ENCODE measurements at regions of chr10 and their contacts with region 1.

Region 1: DNA sequence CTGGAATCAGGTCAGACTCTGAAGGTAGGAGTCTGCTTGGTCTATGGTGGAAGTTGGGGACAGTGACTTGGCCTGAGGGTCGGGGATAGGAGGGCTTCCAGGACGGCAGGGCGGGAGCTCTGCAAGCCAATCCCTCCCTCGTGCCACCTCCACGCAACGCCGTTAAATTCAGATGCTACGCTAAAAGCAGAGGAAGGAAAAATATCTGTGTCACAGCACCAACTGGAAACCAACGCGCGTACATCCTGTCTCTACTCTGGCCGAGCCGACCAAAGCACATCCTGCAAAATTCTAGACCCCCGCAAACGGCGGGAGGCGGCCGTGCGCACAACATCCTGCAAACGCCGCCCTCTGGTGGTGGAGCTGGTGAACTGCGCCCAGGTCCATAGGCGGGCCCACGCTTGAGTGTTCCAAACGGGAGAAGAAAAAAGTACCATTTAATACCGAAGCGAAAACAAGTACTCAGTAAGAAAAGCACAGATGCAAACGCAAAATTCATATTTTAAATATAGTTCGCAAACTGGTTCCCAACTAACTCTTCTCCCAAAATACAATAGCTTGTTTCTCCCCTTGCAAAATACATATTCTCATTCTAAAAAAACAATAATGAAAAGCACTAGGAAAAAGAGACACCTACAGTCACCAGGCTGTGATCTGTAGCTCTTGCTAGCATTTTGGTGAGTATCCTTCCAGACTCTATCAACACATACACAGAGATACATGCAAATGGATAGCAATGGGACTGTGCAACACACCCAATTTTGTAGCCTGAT is 45.7 kb upstream of the HSPA12A start:
- DNase-seq: no peak
- H3K4me3 ChIP-seq: peak overlapping the region; percentile 10; the same call in 1 of the 2 replicates
- H3K27me3 ChIP-seq: no peaks in the 10 kb centered on the region; the same call in 1 of the 2 replicates
- CTCF ChIP-seq: peak; percentile 99

Region 2: DNA sequence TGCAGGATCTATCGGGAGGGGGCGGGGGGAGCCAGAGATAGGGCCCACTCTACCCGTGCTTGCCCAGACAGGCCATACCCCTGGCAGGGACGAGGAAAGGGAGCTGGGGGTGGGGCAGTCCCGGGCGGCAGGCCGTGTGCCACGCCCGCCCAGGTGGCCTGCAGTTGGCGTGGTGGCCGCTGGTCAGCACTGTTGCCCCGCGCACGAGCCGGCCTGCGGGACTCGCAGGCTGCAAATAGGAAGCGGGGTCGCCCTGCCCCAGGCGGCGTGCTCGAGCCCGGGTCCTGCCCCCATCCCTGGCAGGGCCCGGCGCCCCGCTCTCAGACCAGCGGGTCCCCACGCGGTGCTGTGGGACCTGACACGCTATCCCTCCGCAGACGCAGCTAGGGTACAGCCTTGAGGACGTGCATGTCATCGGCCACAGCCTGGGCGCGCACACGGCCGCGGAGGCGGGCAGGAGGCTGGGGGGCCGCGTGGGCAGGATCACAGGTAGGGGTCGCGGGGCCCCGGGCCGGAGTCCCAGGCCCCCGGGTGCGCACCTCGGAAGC is 160.6 kb before region 1 on chr10:
- CTCF ChIA-PET with region 1: interaction called, 28 read pairs
- POLR2A ChIA-PET with region 1: no interaction called
- DNase-seq: no peak
- H3K4me3 ChIP-seq: no peak overlapping the region
- H3K27me3 ChIP-seq: 0 out of 2 replicates have a peak, but pooled peaks cover 2% of the 10 kb centered on the region
- CTCF ChIP-seq: peak; percentile 38

Region 3: DNA sequence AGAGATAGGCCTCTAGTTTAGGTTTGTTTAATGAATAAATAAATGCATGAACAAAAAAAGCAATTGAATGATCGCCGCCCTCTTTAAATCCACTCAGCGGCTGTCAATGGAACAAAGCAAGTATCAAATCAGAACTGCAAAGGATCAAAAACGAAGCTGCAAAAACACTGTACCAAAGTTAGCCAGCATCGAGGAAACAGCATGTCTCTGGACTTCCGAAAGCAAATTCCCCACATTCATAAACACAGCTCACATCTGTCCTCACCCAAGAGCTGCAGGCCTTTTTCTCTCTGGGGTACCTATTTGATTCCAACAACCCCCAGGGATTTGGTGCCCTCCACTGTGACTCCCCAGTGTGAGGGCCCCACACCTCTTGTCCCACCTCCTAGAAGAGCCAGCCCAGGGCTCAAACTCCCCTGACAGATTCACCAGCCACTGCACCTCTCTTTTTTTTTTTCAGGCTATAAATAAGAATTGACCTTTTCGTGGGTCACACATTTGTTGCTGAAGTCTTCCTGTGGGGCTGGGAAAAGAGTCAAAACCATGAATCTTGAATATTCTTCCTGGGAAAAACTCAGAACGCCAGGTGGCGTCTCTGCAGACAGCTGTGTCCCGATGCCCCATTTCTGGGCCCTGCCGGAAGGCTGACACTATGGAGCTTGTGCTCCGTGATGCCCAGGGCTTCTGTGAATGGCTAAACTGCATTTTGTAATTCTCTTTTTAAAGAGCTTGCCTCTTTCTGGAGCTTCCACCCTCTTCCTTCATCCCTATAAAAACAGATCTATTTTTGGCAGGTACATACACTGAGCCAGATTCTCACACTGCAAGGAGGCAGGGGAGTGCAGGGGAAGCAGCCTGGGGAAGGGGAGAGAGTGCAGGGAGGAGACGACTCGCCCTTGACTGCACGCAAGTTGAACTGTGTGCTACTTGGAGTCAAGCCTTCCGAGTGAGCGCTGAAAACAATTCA is 97.4 kb before region 1 on chr10:
- CTCF ChIA-PET with region 1: interaction called, 335 read pairs
- POLR2A ChIA-PET with region 1: no interaction called
- DNase-seq: no peak
- H3K4me3 ChIP-seq: no peak overlapping the region
- H3K27me3 ChIP-seq: no peaks in the 10 kb centered on the region
- CTCF ChIP-seq: no peak

Region 4: DNA sequence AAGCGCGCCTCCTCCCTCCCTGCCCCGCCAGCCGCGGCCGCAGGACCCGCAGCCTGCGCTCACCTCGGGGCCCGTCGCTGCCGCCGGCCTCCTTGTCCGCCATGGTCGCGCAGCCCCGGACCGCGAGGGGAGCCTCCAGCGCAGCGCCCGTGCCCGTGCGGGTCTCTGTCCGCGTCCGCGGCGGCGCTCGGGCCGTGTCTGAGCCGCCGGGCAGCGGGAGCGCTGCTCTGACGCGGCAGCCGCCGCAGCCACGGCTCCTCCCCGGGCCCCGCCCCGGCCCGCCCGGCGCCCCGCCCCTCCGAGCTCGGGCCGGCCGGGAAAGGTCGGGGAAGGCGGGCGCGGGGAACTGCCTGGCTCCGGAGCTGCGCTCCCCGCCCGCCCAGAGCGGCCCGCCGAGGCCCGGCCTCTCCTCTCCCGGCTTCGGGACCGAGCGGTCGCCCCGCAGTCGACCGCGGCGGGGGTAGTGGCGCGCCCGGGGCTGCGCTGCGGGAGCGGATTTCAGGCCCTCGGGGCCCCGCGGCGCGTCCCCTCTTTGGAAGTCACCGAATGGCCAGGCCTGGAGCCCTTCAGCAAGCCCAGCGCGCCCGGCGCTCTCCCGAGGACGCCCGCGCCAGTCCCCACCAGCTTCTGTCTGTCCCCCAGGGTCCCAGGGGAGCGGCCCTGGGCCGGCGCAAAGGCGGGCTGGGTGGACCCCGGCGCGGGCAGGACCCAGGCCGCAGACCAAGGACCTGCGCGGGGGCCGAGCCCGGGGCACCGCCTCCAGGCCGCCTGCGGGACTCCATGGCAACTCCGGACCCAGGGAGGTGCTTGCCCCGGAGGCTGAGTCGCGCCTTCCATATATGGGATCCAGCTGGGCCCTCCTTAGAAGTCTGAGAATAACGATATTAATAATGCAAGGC is 45.5 kb before region 1 on chr10 and contains the start of gene HSPA12A:
- CTCF ChIA-PET with region 1: interaction called, 12 read pairs
- POLR2A ChIA-PET with region 1: no interaction called
- DNase-seq: peak; percentile 52
- H3K4me3 ChIP-seq: peak within 1 kb of the TSS; percentile 67
- H3K27me3 ChIP-seq: no peaks in the 10 kb centered on the region
- CTCF ChIP-seq: no peak
- polyA plus RNA-seq, gene HSPA12A: 7.0 and 7.9 TPM in 2 replicates

Region 5: GRCh38 chr10:116771101-116771958 is 16.7 kb before region 1 on chr10:
- CTCF ChIA-PET with region 1: interaction called, 48 read pairs
- POLR2A ChIA-PET with region 1: no interaction called
- DNase-seq: peak; percentile 47
- H3K4me3 ChIP-seq: no peak overlapping the region
- H3K27me3 ChIP-seq: no peaks in the 10 kb centered on the region; the same call in 1 of the 2 replicates
- CTCF ChIP-seq: 0 out of 2 replicates have a peak, but pooled peaks have one; percentile 5

Measured in BJ (cell line).